CD8-positive, alpha-beta T cell (primary cell): ENCODE measurements at regions of chr20 and their contacts with region 1.

Region 1: GRCh38 chr20:62121776-62122631 is at the start of gene LSM14B:
- DNase-seq: peak; percentile 92 to 99 (median 94)
- ATAC-seq: peak; percentile 76
- H3K4me3 ChIP-seq: peak within 1 kb of the TSS; percentile 55 to 86
- H3K4me3 Mint-ChIP-seq: peak within 1 kb of the TSS; percentile 85
- H3K27ac ChIP-seq: peak within 1 kb of the TSS; percentile 78 to 83
- H3K27ac Mint-ChIP-seq: peak within 1 kb of the TSS; percentile 90
- H3K4me1 ChIP-seq: peaks cover 57% of the 10 kb centered on the region
- H3K4me1 Mint-ChIP-seq: peaks cover 62% of the 10 kb centered on the region
- H3K27me3 ChIP-seq: no peaks in the 10 kb centered on the region
- H3K27me3 Mint-ChIP-seq: no peaks in the 10 kb centered on the region
- CTCF ChIP-seq: no peak
- total RNA-seq, gene LSM14B: 58.2 to 64.6 TPM

Region 2: GRCh38 chr20:61288331-61288784 is 833.6 kb before region 1 on chr20:
- CTCF ChIA-PET with region 1: no interaction called
- POLR2A ChIA-PET with region 1: no interaction called
- intact Hi-C with region 1: no loop called
- DNase-seq: no peak
- ATAC-seq: no peak
- H3K4me3 ChIP-seq: no peak overlapping the region
- H3K4me3 Mint-ChIP-seq: no peak overlapping the region
- H3K27ac ChIP-seq: no peak overlapping the region
- H3K27ac Mint-ChIP-seq: no peak overlapping the region
- H3K4me1 ChIP-seq: no peaks in the 10 kb centered on the region
- H3K4me1 Mint-ChIP-seq: no peaks in the 10 kb centered on the region
- H3K27me3 ChIP-seq: no peaks in the 10 kb centered on the region
- H3K27me3 Mint-ChIP-seq: no peaks in the 10 kb centered on the region
- CTCF ChIP-seq: no peak

Region 3: GRCh38 chr20:62025832-62026563 is 96.0 kb before region 1 on chr20:
- CTCF ChIA-PET with region 1: interaction called, 8 read pairs
- POLR2A ChIA-PET with region 1: interaction called, 7 read pairs
- intact Hi-C with region 1: loop called (anchors 1 kb)
- DNase-seq: peak in 7 of 9 experiments; percentile 4 to 64 (median 27)
- ATAC-seq: peak; percentile 85
- H3K4me3 ChIP-seq: no peak overlapping the region
- H3K4me3 Mint-ChIP-seq: peak overlapping the region; percentile 12
- H3K27ac ChIP-seq: no peak overlapping the region
- H3K27ac Mint-ChIP-seq: peak overlapping the region; percentile 58
- H3K4me1 ChIP-seq: peaks cover 20% of the 10 kb centered on the region
- H3K4me1 Mint-ChIP-seq: peaks cover 54% of the 10 kb centered on the region
- H3K27me3 ChIP-seq: no peaks in the 10 kb centered on the region
- H3K27me3 Mint-ChIP-seq: no peaks in the 10 kb centered on the region
- CTCF ChIP-seq: peak; percentile 48

Region 4: DNA sequence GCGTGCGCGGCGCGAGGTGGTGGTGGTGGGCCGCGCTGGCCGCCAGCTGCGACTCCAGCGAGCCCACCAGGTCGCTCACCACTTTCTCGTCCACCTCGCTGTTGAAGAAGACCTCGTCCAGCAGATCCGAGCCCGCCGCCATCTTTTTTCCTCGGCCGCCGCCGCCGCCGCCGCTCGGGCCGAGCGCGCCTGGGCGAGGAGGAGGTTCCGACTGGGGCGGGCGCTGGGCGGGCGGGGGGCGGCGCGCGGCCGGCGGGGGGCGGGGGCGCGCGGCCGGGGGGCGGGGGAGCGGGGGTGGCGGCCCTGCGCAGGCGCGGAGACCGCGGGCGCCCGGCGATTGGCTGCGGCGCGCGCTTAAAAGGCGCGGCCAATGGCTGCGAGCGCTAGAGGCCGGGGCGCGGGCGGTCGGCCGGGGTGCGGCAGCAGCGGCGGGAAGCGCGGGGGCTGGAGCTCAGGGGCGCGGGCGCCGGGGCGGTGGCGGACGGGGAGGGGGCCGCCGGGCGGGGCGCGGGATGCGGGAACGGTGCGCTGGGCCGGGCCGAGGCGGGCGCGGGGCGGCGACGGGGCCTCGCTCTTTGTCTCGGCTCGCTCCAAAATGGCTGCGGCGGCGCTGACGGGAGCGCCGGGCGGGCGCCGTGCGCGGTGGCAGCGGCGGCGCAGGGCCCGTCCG is 56.2 kb before region 1 on chr20 and contains the start of gene TAF4:
- CTCF ChIA-PET with region 1: interaction called, 12 read pairs
- POLR2A ChIA-PET with region 1: interaction called, 63 read pairs
- intact Hi-C with region 1: loop called (anchors 1 kb)
- DNase-seq: peak; percentile 69 to 92 (median 79)
- ATAC-seq: peak; percentile 77
- H3K4me3 ChIP-seq: peak within 1 kb of the TSS; percentile 54 to 70
- H3K4me3 Mint-ChIP-seq: peak within 1 kb of the TSS; percentile 90
- H3K27ac ChIP-seq: peak within 1 kb of the TSS; percentile 47 to 74
- H3K27ac Mint-ChIP-seq: peak within 1 kb of the TSS; percentile 95
- H3K4me1 ChIP-seq: peaks cover 42% of the 10 kb centered on the region
- H3K4me1 Mint-ChIP-seq: peaks cover 52% of the 10 kb centered on the region
- H3K27me3 ChIP-seq: no peaks in the 10 kb centered on the region
- H3K27me3 Mint-ChIP-seq: no peaks in the 10 kb centered on the region
- CTCF ChIP-seq: no peak
- total RNA-seq, gene TAF4: 9.8 to 14.1 TPM

Region 5: DNA sequence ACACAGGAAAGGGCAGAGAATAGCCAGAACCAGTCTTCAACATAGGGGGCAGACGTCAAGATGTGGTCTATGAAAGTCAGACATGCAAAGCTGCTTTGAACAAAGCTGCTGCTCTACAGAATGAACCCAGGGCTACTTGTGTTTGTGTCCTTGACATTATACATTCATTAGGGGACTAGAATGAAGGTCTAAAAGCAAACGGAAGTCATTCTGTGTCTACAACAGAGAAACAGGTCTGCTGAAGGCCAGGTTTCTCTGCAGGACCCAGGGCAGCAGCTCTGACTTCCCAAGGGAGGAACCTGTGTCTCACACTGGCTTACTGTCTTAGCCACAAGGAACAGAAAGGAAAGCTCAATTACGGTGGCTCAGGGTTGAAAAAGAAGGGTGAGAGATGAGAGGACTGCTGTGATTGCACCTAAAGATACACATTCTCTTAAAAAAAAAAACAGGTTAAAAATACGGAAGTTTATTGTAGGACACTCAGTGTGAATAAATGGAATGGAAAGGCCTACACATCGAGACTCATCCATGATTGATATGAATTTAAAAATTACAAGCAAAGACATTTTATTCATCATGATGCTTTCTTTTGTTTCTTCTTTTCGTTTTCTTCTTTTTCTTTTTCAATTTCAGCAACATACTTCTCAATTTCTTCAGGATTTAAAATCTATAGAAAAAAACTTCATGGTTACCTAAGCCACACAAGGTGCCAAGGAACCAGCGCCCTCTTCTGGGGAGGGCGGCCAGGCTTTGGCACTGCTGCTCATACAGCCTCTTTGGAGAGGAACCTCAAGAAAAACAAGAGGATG is 14.5 kb after region 1 on chr20:
- CTCF ChIA-PET with region 1: interaction called, 44 read pairs
- POLR2A ChIA-PET with region 1: interaction called, 19 read pairs
- intact Hi-C with region 1: no loop called
- DNase-seq: peak; percentile 59 to 86 (median 78)
- ATAC-seq: peak; percentile 61
- H3K4me3 ChIP-seq: no peak overlapping the region
- H3K4me3 Mint-ChIP-seq: no peak overlapping the region
- H3K27ac ChIP-seq: no peak overlapping the region
- H3K27ac Mint-ChIP-seq: peak overlapping the region; percentile 90
- H3K4me1 ChIP-seq: peaks cover 21% of the 10 kb centered on the region
- H3K4me1 Mint-ChIP-seq: peaks cover 42% of the 10 kb centered on the region
- H3K27me3 ChIP-seq: no peaks in the 10 kb centered on the region
- H3K27me3 Mint-ChIP-seq: no peaks in the 10 kb centered on the region
- CTCF ChIP-seq: peak; percentile 80

Region 6: GRCh38 chr20:62143118-62143973 is 21.3 kb after region 1 on chr20 and contains the starts of genes PSMA7 and SS18L1:
- CTCF ChIA-PET with region 1: interaction called, 44 read pairs
- POLR2A ChIA-PET with region 1: interaction called, 19 read pairs
- intact Hi-C with region 1: loop called (anchors 1 kb)
- DNase-seq: peak; percentile 65 to 95 (median 85)
- ATAC-seq: peak; percentile 83
- H3K4me3 ChIP-seq: peak within 1 kb of the TSS; percentile 59 to 60
- H3K4me3 Mint-ChIP-seq: peak within 1 kb of the TSS; percentile 92
- H3K27ac ChIP-seq: peak within 1 kb of the TSS; percentile 58 to 83
- H3K27ac Mint-ChIP-seq: peak within 1 kb of the TSS; percentile 93
- H3K4me1 ChIP-seq: peaks cover 37% of the 10 kb centered on the region
- H3K4me1 Mint-ChIP-seq: peaks cover 50% of the 10 kb centered on the region
- H3K27me3 ChIP-seq: no peaks in the 10 kb centered on the region
- H3K27me3 Mint-ChIP-seq: no peaks in the 10 kb centered on the region
- CTCF ChIP-seq: no peak
- total RNA-seq, gene PSMA7: 170 to 179 TPM
- total RNA-seq, gene SS18L1: 12.6 to 12.9 TPM

Region 7: DNA sequence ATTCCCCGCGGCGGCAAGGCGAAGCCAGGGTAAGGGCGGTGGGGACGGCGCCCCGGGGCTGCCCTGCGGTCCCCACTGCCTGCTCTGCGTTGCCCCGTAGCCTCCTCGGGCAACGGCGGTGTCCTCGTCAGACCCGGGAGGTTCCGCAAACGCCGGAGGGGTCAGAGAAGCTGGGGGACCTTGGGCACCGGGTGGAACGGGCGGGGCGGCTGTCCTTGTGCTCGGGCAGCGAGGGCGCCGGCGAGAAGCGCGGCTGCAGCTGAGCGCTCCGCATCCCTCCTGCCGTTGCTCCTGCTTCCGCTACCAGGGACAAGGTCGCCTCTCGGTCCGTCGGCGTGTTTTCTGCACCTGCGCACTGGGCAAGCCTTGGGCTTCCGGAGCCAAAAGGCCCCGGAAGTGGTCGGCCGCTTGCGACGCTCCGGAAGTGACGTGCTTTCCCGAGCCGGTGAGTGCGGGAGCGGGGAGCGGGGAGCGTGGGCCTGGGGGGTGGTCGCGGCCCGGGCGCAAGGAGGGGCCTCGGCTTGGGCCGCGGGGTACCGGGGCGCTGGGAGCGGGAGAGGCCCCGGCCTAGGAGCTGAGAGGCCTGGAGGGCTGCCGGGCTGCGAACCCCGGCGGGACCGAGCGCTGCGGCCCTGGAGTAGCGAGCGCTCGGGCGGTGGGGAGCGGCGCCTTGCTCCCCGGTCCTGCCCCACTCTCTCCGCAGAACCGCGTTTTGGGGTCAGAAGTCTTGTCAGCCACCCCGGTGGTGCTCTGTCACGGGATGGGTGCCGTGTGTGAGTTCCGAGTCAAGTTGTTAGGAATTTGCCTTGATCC is 60.8 kb after region 1 on chr20 and contains the start of gene MTG2:
- CTCF ChIA-PET with region 1: no interaction called
- POLR2A ChIA-PET with region 1: no interaction called
- intact Hi-C with region 1: loop called (anchors 1 to 2 kb)
- DNase-seq: peak; percentile 85 to 98 (median 95)
- ATAC-seq: peak; percentile 92
- H3K4me3 ChIP-seq: peak within 1 kb of the TSS; percentile 82 to 89
- H3K4me3 Mint-ChIP-seq: peak within 1 kb of the TSS; percentile 95
- H3K27ac ChIP-seq: peak within 1 kb of the TSS; percentile 89 to 93
- H3K27ac Mint-ChIP-seq: peak within 1 kb of the TSS; percentile 98
- H3K4me1 ChIP-seq: peaks cover 17% of the 10 kb centered on the region
- H3K4me1 Mint-ChIP-seq: peaks cover 43% of the 10 kb centered on the region
- H3K27me3 ChIP-seq: no peaks in the 10 kb centered on the region
- H3K27me3 Mint-ChIP-seq: no peaks in the 10 kb centered on the region
- CTCF ChIP-seq: no peak
- total RNA-seq, gene MTG2: 7.7 to 8.8 TPM

Region 8: GRCh38 chr20:62861726-62862336 is 739.8 kb after region 1 on chr20 and contains the start of gene TCFL5:
- CTCF ChIA-PET with region 1: no interaction called
- POLR2A ChIA-PET with region 1: no interaction called
- intact Hi-C with region 1: loop called in 1 of 2 experiments (anchors 2 kb)
- DNase-seq: peak; percentile 88 to 99 (median 93)
- ATAC-seq: peak; percentile 90
- H3K4me3 ChIP-seq: peak within 1 kb of the TSS; percentile 20 to 26
- H3K4me3 Mint-ChIP-seq: peak within 1 kb of the TSS; percentile 77
- H3K27ac ChIP-seq: peak within 1 kb of the TSS in 1 of 2 experiments; percentile 56
- H3K27ac Mint-ChIP-seq: peak within 1 kb of the TSS; percentile 88
- H3K4me1 ChIP-seq: peaks cover 15% of the 10 kb centered on the region
- H3K4me1 Mint-ChIP-seq: peaks cover 20% of the 10 kb centered on the region
- H3K27me3 ChIP-seq: no peaks in the 10 kb centered on the region
- H3K27me3 Mint-ChIP-seq: no peaks in the 10 kb centered on the region
- CTCF ChIP-seq: no peak
- total RNA-seq, gene TCFL5: 4.3 to 4.8 TPM